T-cell (primary cell): ENCODE measurements at regions of chr10 and their contacts with region 1.

Region 1: GRCh38 chr10:86411281-86411841 is 44.8 kb upstream of the GRID1 start:
- DNase-seq: peak in 6 of 35 experiments; percentile 15 to 51 (median 26)
- ATAC-seq: peak; percentile 68 to 83 (median 78)
- H3K4me3 ChIP-seq: peak overlapping the region; percentile 14 to 54
- H3K4me3 Mint-ChIP-seq: peak overlapping the region; percentile 57 to 82 (median 64)
- H3K27ac ChIP-seq: peak overlapping the region; percentile 67
- H3K27ac Mint-ChIP-seq: peak overlapping the region; percentile 87 to 92
- H3K4me1 ChIP-seq: peaks cover 52 to 53% of the 10 kb centered on the region in 2 experiments
- H3K4me1 Mint-ChIP-seq: peaks cover 46 to 56% (median 52%) of the 10 kb centered on the region in 3 donors
- H3K27me3 ChIP-seq: no peaks in the 10 kb centered on the region
- H3K27me3 Mint-ChIP-seq: no peaks in the 10 kb centered on the region

Region 2: DNA sequence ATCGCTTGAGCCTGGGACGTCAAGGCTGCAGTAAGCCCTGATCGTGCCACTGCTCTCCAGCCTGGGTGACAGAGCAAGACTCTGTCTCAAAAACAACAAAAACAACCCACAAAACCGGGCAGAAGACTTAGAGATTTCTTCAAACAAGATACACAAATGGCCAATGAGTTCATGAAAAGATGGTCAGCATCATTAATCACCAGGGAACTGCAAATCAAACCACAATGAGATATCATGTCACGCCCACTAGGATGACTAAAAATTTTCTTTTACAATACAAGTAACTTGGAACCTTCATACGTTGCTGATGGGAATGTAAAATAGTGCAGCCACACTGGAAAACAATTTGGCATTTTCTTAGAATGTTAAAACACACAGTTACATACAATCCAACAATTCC is 32.6 kb after region 1 on chr10:
- CTCF ChIA-PET with region 1: no interaction called
- POLR2A ChIA-PET with region 1: interaction called, 3 to 11 read pairs
- DNase-seq: no peak
- ATAC-seq: no peak
- H3K4me3 ChIP-seq: no peak overlapping the region
- H3K4me3 Mint-ChIP-seq: no peak overlapping the region
- H3K27ac ChIP-seq: no peak overlapping the region
- H3K27ac Mint-ChIP-seq: no peak overlapping the region
- H3K4me1 ChIP-seq: peaks cover 2 to 8% of the 10 kb centered on the region in 2 experiments
- H3K4me1 Mint-ChIP-seq: peaks cover 28 to 30% (median 29%) of the 10 kb centered on the region in 3 donors
- H3K27me3 ChIP-seq: no peaks in the 10 kb centered on the region
- H3K27me3 Mint-ChIP-seq: no peaks in the 10 kb centered on the region